Activated B cell treated with CpG ODN at 0.5 μM for 24 hours (primary cell): ENCODE measurements at regions of chr17 and their contacts with region 1.

Region 1: DNA sequence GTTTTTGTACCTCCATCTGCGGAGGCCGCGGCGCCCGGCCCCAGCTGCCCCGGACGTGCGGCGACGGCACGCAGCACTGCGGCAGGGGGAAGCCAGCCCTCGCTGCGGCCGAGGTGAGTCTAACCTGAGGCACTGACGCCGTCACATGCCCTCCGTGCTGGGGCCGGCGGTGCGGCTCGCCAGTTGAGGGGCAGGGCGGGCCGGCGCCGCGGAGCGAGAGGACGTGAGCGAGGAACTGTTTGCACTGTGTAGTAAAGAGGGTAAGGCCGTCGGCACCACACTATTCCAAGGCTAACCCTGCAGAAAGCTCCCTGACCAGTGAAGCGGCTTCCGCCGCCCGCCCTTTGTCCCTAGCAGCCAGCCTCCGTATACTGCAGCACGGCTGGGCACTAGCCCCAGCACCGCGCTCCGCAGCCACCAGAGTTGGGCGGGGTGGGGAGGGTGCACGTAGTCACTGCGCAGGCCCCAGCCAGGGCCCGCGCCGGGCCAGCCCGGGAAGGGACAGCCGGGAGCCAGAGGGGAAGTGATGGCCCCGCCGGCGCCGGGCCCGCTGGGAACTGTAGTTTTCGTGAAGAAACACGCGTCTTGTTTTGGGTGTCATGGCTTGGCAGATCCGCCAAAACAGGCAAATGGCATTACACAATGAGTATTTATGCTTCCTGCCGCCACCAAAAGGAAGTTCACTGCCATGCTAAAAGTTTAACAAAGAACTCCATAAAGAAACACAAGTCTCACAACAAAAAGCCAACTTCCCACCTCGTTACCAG is 580 bp upstream of the KANSL1 start:
- DNase-seq: peak; percentile 89
- ATAC-seq: peak; percentile 69
- H3K4me3 Mint-ChIP-seq: peak overlapping the region; percentile 84
- H3K27ac Mint-ChIP-seq: peak overlapping the region; percentile 97
- H3K4me1 Mint-ChIP-seq: peaks cover 51% of the 10 kb centered on the region
- H3K27me3 Mint-ChIP-seq: no peaks in the 10 kb centered on the region
- CTCF ChIP-seq: no peak

Region 2: GRCh38 chr17:45317112-45317928 is 876.5 kb before region 1 on chr17:
- CTCF ChIA-PET with region 1: no interaction called
- POLR2A ChIA-PET with region 1: no interaction called
- intact Hi-C with region 1: no loop called
- DNase-seq: peak; percentile 99
- ATAC-seq: peak; percentile 79
- H3K4me3 Mint-ChIP-seq: peak overlapping the region; percentile 90
- H3K27ac Mint-ChIP-seq: peak overlapping the region; percentile 96
- H3K4me1 Mint-ChIP-seq: peaks cover 49% of the 10 kb centered on the region
- H3K27me3 Mint-ChIP-seq: no peaks in the 10 kb centered on the region
- CTCF ChIP-seq: no peak

Region 3: DNA sequence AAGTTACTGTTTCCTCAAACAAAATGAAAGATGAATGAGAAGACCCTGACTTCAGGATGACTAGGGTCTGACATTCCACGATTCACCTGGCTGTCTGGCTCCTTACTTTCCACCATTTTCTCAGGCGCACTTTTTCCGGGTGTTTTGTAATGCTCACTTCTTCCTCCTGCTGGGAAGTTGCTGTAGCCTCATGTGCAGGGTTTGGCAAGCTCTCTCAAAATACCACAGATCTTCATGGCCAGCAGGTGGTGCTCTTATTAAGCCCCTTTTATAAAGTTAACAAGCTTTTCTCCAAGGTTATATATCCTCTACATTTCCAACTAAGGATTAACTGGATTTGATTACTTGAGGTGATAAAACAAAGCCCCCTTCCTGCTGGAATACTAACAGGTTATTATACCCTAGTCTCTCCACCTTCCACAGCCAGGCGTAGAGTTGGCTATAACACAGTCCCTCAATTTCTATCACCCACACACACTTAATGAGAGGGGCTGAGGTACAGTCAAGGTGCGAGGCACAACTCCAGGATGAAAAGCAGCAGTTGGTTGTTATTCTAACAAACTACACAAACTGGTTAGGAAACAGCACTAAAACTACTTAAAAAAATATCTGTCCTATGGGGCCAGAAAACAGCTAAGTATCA is 149.4 kb before region 1 on chr17:
- CTCF ChIA-PET with region 1: interaction called, 10 read pairs
- POLR2A ChIA-PET with region 1: interaction called, 3 read pairs
- intact Hi-C with region 1: loop called (anchors 1 kb)
- DNase-seq: no peak
- ATAC-seq: peak; percentile 61
- H3K4me3 Mint-ChIP-seq: no peak overlapping the region
- H3K27ac Mint-ChIP-seq: no peak overlapping the region
- H3K4me1 Mint-ChIP-seq: peaks cover 2% of the 10 kb centered on the region
- H3K27me3 Mint-ChIP-seq: no peaks in the 10 kb centered on the region
- CTCF ChIP-seq: no peak

Region 4: GRCh38 chr17:46097497-46097896 is 96.3 kb before region 1 on chr17:
- CTCF ChIA-PET with region 1: no interaction called
- POLR2A ChIA-PET with region 1: interaction called, 3 read pairs
- intact Hi-C with region 1: loop called (anchors 5 kb)
- DNase-seq: no peak
- ATAC-seq: no peak
- H3K4me3 Mint-ChIP-seq: no peak overlapping the region
- H3K27ac Mint-ChIP-seq: no peak overlapping the region
- H3K4me1 Mint-ChIP-seq: peaks cover 38% of the 10 kb centered on the region
- H3K27me3 Mint-ChIP-seq: no peaks in the 10 kb centered on the region
- CTCF ChIP-seq: no peak

Region 5: GRCh38 chr17:46167826-46168569 is 25.8 kb before region 1 on chr17:
- CTCF ChIA-PET with region 1: interaction called, 10 read pairs
- POLR2A ChIA-PET with region 1: interaction called, 3 read pairs
- intact Hi-C with region 1: no loop called
- DNase-seq: no peak
- ATAC-seq: no peak
- H3K4me3 Mint-ChIP-seq: no peak overlapping the region
- H3K27ac Mint-ChIP-seq: peak overlapping the region; percentile 9
- H3K4me1 Mint-ChIP-seq: peaks cover 71% of the 10 kb centered on the region
- H3K27me3 Mint-ChIP-seq: no peaks in the 10 kb centered on the region
- CTCF ChIP-seq: no peak

Region 6: GRCh38 chr17:46212634-46213435 is 19.0 kb after region 1 on chr17:
- CTCF ChIA-PET with region 1: interaction called, 22 read pairs
- POLR2A ChIA-PET with region 1: interaction called, 5 read pairs
- intact Hi-C with region 1: loop called (anchors 1 kb)
- DNase-seq: no peak
- ATAC-seq: peak; percentile 77
- H3K4me3 Mint-ChIP-seq: no peak overlapping the region
- H3K27ac Mint-ChIP-seq: no peak overlapping the region
- H3K4me1 Mint-ChIP-seq: peaks cover 7% of the 10 kb centered on the region
- H3K27me3 Mint-ChIP-seq: no peaks in the 10 kb centered on the region
- CTCF ChIP-seq: peak; percentile 63

Region 7: DNA sequence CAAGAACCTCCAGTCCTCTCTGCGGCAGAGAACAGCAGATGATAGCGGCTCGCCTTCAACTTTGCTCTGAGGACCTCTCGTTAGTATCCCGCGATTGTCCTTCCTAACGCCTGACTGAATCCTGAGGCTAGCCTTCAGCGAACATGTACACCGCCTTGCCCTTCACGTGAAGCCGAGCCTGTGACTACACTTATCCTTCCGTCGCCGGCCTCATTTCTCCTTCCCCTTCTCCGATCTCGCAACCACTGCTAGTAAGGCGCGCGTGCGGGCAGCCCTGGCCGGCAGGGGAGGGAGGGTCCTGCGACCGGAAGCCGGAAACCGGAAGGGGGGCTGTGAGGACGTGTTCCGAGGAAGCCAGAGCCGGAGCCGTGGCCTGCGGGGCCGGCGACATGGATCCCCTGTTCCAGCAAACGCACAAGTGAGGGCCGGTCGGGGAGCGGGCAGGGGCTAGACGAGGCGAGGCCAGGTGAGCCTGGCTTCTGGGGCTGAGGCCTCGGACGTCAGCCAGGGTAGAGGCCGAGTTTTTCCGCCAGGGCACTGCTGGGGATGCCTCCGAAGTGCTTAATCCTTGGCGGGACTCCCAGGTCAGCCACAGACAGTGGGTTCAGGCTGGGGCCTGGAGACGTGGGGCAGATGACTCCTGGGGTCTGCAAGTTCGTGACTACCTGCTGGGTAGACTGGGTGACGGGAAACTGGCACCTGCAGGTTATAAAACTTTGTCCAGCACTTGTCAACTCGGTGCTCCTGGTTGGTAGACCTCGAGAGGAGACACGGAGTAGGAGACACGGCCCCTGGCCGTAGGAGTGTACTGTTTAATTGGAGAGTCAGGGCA is 729.2 kb after region 1 on chr17 and contains the start of gene GOSR2:
- CTCF ChIA-PET with region 1: no interaction called
- POLR2A ChIA-PET with region 1: no interaction called
- intact Hi-C with region 1: loop called (anchors 1 kb)
- DNase-seq: peak; percentile 93
- ATAC-seq: peak; percentile 95
- H3K4me3 Mint-ChIP-seq: peak within 1 kb of the TSS; percentile 91
- H3K27ac Mint-ChIP-seq: peak within 1 kb of the TSS; percentile 100
- H3K4me1 Mint-ChIP-seq: peaks cover 49% of the 10 kb centered on the region
- H3K27me3 Mint-ChIP-seq: peaks cover 2% of the 10 kb centered on the region
- CTCF ChIP-seq: no peak
- total RNA-seq, gene GOSR2: 64.7 and 78.0 TPM in 2 replicates